PC-3 (cell line): ENCODE measurements at regions of chr2 and their contacts with region 1.

Region 1: DNA sequence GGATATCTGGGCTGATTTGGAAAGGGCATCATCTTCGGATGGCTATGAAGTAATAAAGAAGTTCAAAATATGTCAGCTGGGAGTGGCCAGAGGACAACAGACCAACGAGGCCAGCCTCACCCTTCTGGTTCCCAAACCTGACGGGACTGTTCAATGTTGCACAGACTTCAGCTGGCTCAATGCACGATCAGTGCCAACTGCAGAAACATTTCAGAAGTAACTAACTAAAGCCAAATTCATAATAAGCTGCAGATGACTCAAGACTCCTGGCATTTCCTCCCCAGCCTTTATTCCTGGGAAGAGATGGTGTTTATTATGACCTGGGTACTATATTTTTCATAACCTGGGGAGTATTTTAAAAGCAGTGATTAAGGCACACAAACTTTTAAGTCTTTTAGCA is 3.8 kb upstream of the ATP6V1C2 start:
- DNase-seq: peak; percentile 91
- ATAC-seq: peak; percentile 81
- H3K4me3 ChIP-seq: peak overlapping the region; percentile 20; the same call in 1 of the 2 replicates
- H3K27ac ChIP-seq: peak overlapping the region; percentile 36
- H3K4me1 ChIP-seq: peaks cover 47% of the 10 kb centered on the region
- H3K27me3 ChIP-seq: peaks cover 21% of the 10 kb centered on the region
- CTCF ChIP-seq: no peak

Region 2: DNA sequence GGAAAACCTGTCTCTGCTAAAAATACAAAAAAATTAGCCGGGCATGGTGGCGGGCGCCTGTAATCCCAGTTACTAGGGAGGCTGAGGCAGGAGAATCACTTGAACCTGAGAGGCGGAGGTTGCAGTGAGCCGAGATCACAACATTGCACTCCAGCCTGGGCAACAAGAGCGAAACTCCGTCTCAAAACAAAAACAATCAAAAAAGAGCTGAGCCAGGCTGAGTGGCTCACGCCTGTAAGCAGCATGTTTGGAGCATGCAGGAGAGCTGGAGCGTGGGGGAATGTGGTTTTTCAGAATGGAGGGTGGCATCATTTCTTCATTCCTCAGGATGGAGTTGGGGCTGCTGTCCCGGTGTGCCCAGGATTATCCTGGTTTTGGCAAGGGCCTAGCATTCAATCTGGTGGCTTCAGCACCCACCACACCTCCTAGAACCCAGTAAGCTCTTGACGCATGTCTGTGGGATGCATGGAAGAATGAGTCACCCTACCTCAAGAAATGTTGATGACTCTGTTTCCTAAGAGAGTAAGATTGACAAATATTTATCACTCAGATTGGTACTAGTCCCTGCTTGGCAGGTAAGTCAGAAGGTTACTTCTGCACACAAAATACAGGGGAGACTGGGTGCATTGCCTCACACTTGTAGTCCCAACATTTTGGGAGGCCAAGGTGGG is 179.3 kb before region 1 on chr2:
- CTCF ChIA-PET with region 1: no interaction called
- POLR2A ChIA-PET with region 1: no interaction called
- intact Hi-C with region 1: no loop called
- DNase-seq: peak; percentile 94
- ATAC-seq: peak; percentile 86
- H3K4me3 ChIP-seq: no peak overlapping the region
- H3K27ac ChIP-seq: peak overlapping the region; percentile 77
- H3K4me1 ChIP-seq: peaks cover 30% of the 10 kb centered on the region
- H3K27me3 ChIP-seq: no peaks in the 10 kb centered on the region
- CTCF ChIP-seq: no peak

Region 3: GRCh38 chr2:10634495-10634894 is 83.1 kb before region 1 on chr2:
- CTCF ChIA-PET with region 1: no interaction called
- POLR2A ChIA-PET with region 1: no interaction called
- intact Hi-C with region 1: no loop called
- DNase-seq: no peak
- ATAC-seq: no peak
- H3K4me3 ChIP-seq: no peak overlapping the region
- H3K27ac ChIP-seq: no peak overlapping the region
- H3K4me1 ChIP-seq: peaks cover 7% of the 10 kb centered on the region; the same call in 1 of the 2 replicates
- H3K27me3 ChIP-seq: no peaks in the 10 kb centered on the region
- CTCF ChIP-seq: no peak

Region 4: GRCh38 chr2:10759151-10759714 is 41.6 kb after region 1 on chr2:
- CTCF ChIA-PET with region 1: no interaction called
- POLR2A ChIA-PET with region 1: no interaction called
- intact Hi-C with region 1: loop called (anchors 5 kb)
- DNase-seq: no peak
- ATAC-seq: no peak
- H3K4me3 ChIP-seq: no peak overlapping the region
- H3K27ac ChIP-seq: no peak overlapping the region
- H3K4me1 ChIP-seq: peaks cover 8% of the 10 kb centered on the region; the same call in 1 of the 2 replicates
- H3K27me3 ChIP-seq: no peaks in the 10 kb centered on the region
- CTCF ChIP-seq: no peak

Region 5: DNA sequence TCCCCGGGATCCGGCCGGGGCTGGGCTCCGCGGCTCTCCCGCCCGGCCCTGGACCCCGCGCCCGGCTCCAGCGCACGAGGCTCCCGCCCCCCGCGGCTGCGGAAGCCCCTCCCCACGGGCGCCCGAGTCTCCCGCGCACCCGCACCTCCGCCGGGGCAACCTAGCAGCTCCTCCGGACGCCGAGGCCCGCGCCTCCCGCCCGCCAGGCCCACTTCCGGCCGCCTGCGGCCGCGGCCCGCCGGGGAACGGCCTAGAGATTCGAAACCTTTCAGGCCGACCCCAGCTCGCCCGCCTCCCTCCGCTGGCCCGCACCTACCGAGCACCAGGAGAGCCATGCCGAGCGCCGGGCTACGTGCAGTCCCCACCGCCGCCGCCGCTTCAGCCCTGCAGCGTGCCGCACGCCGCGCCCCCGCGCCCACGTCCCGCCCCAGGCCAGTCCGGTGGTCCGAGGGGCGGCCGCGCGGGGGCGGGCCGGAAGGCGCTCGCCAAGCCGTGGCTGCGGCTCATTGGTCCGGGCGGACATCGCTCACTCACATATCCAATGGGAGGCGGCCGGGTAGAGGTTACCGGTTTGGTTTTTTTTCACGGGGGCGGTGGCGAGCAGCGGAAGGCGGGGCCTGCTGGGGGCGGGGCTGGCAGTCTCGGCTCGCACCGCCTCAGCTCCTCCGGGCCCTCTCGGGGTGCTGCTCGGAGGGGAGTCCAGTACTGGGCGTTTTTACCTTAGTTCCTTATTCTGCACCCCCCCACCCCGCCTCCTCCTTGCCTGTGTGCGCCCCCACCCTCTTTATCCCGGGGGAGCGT is 94.9 kb after region 1 on chr2 and contains the start of gene PDIA6:
- CTCF ChIA-PET with region 1: no interaction called
- POLR2A ChIA-PET with region 1: no interaction called
- intact Hi-C with region 1: loop called (anchors 10 kb)
- DNase-seq: peak; percentile 97
- ATAC-seq: peak; percentile 94
- H3K4me3 ChIP-seq: peak within 1 kb of the TSS; percentile 78
- H3K27ac ChIP-seq: peak within 1 kb of the TSS; percentile 64
- H3K4me1 ChIP-seq: peaks cover 22% of the 10 kb centered on the region
- H3K27me3 ChIP-seq: no peaks in the 10 kb centered on the region
- CTCF ChIP-seq: no peak
- total RNA-seq, gene PDIA6: 350 and 351 TPM in 2 replicates